Transverse colon (tissue), 4 donors: ENCODE measurements at regions of chr16 and their contacts with region 1.

Region 1: DNA sequence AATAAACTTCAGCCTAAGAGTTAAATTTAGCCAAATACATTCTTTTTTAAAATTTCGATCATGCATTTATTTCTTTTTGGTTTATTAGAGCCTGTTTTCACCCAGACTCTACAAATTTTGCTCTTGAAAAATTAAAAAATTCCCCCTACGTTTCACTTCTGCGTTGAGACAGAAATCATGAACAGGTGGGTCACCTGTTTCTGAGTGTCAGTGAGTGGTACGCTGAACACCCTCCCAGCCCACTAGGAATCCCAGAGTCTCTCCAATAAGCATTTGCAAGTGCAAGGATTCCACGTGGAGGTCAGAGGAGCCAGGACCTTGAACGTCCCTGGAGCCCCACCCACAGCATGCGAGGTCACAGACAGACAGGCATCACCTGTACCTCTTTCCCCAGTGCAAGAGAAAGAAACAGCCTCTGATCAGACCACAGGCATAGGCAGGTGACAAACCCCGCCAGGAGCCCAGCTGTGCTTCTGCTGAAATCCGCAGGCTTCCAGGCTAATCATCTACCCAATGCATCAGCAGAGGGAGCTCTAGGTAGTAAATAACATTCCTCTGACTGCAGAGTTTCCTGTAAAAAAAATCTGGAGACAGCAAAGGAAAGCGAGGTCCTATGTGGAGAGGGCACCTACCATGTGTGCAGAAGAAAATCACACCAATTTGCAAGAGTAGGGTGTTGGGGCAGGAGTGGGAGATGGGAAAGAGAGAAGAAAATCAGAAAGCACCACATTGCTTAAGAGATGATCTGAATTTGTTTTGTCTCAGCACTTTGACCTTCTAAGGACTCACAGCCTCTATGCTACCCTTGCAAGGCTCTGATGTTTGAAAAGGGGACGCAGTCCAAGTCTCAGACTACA is 5.9 kb upstream of the XYLT1 start:
- DNase-seq: peak; percentile 65
- H3K4me3 ChIP-seq: no peak overlapping the region
- H3K27ac ChIP-seq: no peak overlapping the region
- H3K4me1 ChIP-seq: peaks cover 0 to 15% (median 8%) of the 10 kb centered on the region in 4 donors
- H3K27me3 ChIP-seq: no peaks in the 10 kb centered on the region
- CTCF ChIP-seq: peak; percentile 33 to 53 (median 44)
- EP300 ChIP-seq: no peak
- POLR2A ChIP-seq: no peak

Region 2: GRCh38 chr16:16861546-16861945 is 615.1 kb before region 1 on chr16:
- in situ Hi-C with region 1: loop called in 1 of 4 experiments (anchors 10 kb)
- intact Hi-C with region 1: no loop called
- DNase-seq: peak; percentile 49
- H3K4me3 ChIP-seq: no peak overlapping the region
- H3K27ac ChIP-seq: no peak overlapping the region
- H3K4me1 ChIP-seq: no peaks in the 10 kb centered on the region
- H3K27me3 ChIP-seq: peaks cover under 1% of the 10 kb centered on the region
- CTCF ChIP-seq: peak; percentile 67 to 80 (median 70)
- EP300 ChIP-seq: no peak
- POLR2A ChIP-seq: no peak

Region 3: GRCh38 chr16:17194190-17194780 is 282.4 kb before region 1 on chr16:
- in situ Hi-C with region 1: loop called in 1 of 4 experiments (anchors 10 kb)
- intact Hi-C with region 1: no loop called
- DNase-seq: peak; percentile 65
- H3K4me3 ChIP-seq: no peak overlapping the region
- H3K27ac ChIP-seq: no peak overlapping the region
- H3K4me1 ChIP-seq: no peaks in the 10 kb centered on the region
- H3K27me3 ChIP-seq: no peaks in the 10 kb centered on the region
- CTCF ChIP-seq: peak; percentile 68 to 86 (median 72)
- EP300 ChIP-seq: no peak
- POLR2A ChIP-seq: no peak

Region 4: DNA sequence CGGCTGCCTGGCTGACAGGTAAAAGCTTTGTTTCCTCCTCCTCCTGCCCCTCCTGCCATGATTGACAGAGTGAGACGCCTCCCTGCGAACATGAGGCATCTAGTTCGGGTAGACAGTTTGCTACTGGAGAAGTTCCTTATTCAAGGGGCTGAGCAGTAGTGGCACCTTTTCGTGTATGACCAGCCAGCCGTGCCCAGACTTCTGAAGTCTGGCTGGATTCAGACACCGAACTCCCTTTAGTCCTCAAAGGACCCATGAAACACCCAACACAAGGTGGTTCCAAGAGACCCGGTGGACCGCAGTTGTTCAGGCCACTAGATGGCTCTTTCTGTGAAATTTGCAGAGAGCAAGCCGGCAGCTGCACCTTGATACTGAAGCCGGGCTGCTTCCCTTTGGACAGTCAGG is 198.7 kb before region 1 on chr16:
- in situ Hi-C with region 1: loop called in 2 of 4 experiments (anchors 10 to 25 kb)
- intact Hi-C with region 1: no loop called
- DNase-seq: peak; percentile 70
- H3K4me3 ChIP-seq: no peak overlapping the region
- H3K27ac ChIP-seq: peak overlapping the region; percentile 53 to 87 (median 80)
- H3K4me1 ChIP-seq: peaks cover 20 to 44% (median 35%) of the 10 kb centered on the region in 4 donors
- H3K27me3 ChIP-seq: no peaks in the 10 kb centered on the region
- CTCF ChIP-seq: peak; percentile 41 to 69 (median 51)
- EP300 ChIP-seq: no peak
- POLR2A ChIP-seq: peak; percentile 15

Region 5: DNA sequence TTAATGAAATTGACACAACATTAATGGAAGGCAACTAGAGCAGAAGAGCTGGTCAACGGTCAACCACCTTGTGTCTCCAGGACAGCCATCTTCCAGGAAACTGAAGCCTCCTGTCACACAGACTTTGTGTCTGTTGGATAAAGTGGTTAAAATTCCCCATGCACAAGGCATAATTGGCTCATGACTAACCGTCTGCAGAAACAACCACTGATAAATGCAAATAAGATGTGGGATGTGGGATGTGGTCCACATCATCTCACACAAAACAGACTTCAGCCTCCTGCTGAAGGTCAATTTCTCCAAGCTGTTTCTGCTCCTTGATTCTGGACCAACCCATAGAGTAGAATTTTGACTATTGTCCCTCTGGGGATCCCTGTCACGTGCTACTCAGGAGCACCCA is 21.0 kb after region 1 on chr16:
- in situ Hi-C with region 1: no loop called
- intact Hi-C with region 1: no loop called
- DNase-seq: no peak
- H3K4me3 ChIP-seq: no peak overlapping the region
- H3K27ac ChIP-seq: no peak overlapping the region
- H3K4me1 ChIP-seq: no peaks in the 10 kb centered on the region
- H3K27me3 ChIP-seq: no peaks in the 10 kb centered on the region
- CTCF ChIP-seq: no peak
- EP300 ChIP-seq: no peak
- POLR2A ChIP-seq: no peak

Region 6: DNA sequence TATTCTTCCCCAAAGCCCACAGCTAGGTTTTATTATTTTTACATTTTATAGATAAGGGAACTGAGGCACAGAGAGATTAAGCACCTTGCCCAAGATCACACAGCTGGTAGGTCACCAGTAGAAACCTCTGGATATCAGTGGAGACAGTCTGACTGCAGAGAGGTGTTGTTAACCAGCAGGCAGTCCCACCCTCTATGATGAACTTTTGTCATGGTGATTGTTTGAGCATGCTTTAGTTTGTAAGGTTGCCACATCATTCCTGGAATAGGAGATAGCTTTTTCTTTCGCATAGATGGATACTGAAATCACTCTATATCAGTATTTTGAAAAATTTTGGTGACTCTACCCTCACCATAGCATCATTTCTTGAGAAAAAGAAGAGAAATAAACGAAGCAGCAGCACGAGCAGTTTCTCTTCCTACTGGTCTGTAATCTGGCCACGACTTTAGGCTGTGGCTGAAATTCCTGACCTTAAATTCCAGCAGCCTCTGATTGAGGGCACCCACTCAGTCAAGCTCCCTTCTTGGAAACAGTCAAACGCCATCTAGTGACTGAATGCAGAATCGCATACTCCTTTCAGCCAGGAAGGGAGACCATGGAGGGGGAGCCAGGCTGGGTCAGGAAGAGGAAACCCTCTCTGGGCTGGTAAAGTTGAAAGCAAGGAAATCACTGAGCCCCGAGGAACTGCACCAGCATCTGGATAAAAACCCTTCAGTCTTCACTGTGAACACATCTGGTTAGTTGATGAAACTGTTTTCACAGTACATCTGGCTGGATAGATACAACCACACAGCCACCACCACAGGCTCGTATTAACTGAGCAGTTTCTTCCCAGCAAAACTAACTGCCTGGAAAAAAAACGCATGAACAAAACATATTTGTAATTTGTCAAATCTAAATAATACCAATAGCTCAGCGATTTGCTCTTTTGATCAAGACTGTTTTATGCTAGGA is 102.6 kb after region 1 on chr16:
- in situ Hi-C with region 1: loop called in 2 of 4 experiments (anchors 10 kb)
- intact Hi-C with region 1: no loop called
- DNase-seq: peak; percentile 66
- H3K4me3 ChIP-seq: no peak overlapping the region
- H3K27ac ChIP-seq: no peak overlapping the region
- H3K4me1 ChIP-seq: peaks cover 0 to 6% (median 0%) of the 10 kb centered on the region in 4 donors
- H3K27me3 ChIP-seq: peaks cover 6% of the 10 kb centered on the region
- CTCF ChIP-seq: peak; percentile 78 to 87 (median 85)
- EP300 ChIP-seq: no peak
- POLR2A ChIP-seq: no peak